ENCODE measurements at regions of chr9 and their contacts with region 1.

Region 1: GRCh38 chr9:18255158-18255629 is 218.8 kb upstream of the ADAMTSL1 start:
- DNase-seq: peak; percentile 73
- H3K4me3 ChIP-seq: no peak overlapping the region
- H3K27ac ChIP-seq: no peak overlapping the region
- H3K27me3 ChIP-seq: no peaks in the 10 kb centered on the region
- CTCF ChIP-seq: peak; percentile 91

Region 2: GRCh38 chr9:17942230-17942897 is 312.8 kb before region 1 on chr9:
- CTCF ChIA-PET with region 1: no interaction called
- POLR2A ChIA-PET with region 1: no interaction called
- DNase-seq: no peak
- H3K4me3 ChIP-seq: no peak overlapping the region
- H3K27ac ChIP-seq: no peak overlapping the region
- H3K27me3 ChIP-seq: no peaks in the 10 kb centered on the region
- CTCF ChIP-seq: no peak

Region 3: DNA sequence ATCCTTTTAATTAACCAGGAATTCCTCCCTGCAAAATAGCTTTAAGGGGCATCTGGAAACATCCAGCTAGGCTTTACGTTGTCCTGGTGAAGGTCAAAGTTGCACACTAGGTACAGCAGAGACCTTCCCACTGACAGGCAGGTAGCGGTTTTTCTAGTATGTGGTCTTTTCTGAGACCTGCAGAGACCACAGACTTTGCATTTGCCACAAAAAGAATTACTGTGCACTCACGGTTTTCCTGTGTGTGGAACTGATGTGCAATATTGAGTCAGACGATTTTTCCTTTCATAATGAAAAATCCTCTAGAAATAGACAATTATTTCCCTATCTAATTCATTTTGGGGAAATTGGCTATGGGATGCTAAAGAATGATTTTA is 198.2 kb before region 1 on chr9:
- CTCF ChIA-PET with region 1: no interaction called
- POLR2A ChIA-PET with region 1: no interaction called
- DNase-seq: no peak
- H3K4me3 ChIP-seq: no peak overlapping the region
- H3K27ac ChIP-seq: no peak overlapping the region
- H3K27me3 ChIP-seq: no peaks in the 10 kb centered on the region
- CTCF ChIP-seq: no peak

Region 4: GRCh38 chr9:18238254-18238653 is 16.9 kb before region 1 on chr9:
- CTCF ChIA-PET with region 1: interaction called, 12 read pairs
- POLR2A ChIA-PET with region 1: no interaction called
- DNase-seq: peak; percentile 8
- H3K4me3 ChIP-seq: peak overlapping the region; percentile 8; the same call in 1 of the 2 replicates
- H3K27ac ChIP-seq: peak overlapping the region; percentile 32
- H3K27me3 ChIP-seq: no peaks in the 10 kb centered on the region
- CTCF ChIP-seq: no peak

Region 5: DNA sequence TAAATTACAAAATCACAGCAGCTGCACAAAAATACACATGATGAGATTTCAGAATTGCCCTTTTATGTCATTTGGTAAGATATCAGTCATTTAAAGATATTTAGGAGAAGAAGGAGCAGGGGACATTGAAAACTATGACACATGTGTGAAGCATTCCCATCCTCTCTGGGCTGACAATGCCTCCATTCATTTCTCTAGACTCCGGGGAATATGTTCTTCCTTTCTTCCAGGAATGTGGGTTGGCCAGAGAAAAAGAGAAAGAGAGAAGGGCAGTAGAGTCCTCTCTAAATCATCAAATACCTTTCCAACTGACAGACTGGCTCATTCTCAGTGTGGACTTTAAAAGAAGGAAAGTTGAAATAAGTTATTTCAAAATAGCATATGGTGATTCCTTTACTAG is 13.2 kb after region 1 on chr9:
- CTCF ChIA-PET with region 1: interaction called, 18 read pairs
- POLR2A ChIA-PET with region 1: no interaction called
- DNase-seq: no peak
- H3K4me3 ChIP-seq: no peak overlapping the region
- H3K27ac ChIP-seq: no peak overlapping the region
- H3K27me3 ChIP-seq: no peaks in the 10 kb centered on the region
- CTCF ChIP-seq: no peak

Region 6: GRCh38 chr9:18396102-18396728 is 141.0 kb after region 1 on chr9:
- CTCF ChIA-PET with region 1: interaction called, 11 read pairs
- POLR2A ChIA-PET with region 1: no interaction called
- DNase-seq: no peak
- H3K4me3 ChIP-seq: no peak overlapping the region
- H3K27ac ChIP-seq: no peak overlapping the region
- H3K27me3 ChIP-seq: no peaks in the 10 kb centered on the region
- CTCF ChIP-seq: peak; percentile 22; the same call in 1 of the 2 replicates

Region 7: DNA sequence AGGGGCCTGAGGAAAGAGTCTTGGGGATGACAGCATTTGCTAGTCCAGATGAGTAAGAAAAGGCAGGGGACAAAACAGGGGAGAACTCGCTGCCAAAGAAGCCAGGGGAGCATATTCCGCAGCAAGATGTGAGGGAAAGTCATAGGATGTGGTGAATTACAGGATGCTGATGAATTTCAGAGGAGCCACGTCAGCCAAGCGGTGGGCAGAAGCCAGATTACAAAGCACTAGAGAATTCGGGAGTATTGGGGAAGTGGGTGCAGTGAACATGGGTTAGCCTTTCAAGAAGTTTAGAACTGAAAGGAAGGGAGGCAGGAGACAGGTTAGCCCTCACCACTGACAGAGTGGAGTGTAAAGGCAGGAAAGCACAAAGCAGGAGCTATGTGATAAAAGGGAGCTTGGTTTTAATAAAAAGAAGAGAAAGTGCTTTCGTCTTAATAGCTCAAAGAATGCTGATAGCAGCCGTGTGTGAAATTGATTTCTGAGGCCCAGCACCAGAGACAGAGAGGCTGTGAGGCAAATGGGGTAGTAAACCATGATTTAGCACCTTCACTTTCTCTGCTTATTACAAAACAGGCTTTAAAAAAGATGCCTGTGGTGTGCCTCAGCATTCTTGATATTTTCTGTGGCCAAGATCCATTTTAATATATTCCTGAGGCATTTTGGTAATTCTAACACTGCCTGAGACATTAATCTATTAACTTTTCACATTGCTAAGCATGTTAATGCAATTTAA is 235.6 kb after region 1 on chr9:
- CTCF ChIA-PET with region 1: interaction called, 15 read pairs
- POLR2A ChIA-PET with region 1: interaction called, 4 read pairs
- DNase-seq: peak; percentile 96
- H3K4me3 ChIP-seq: peak overlapping the region; percentile 47
- H3K27ac ChIP-seq: peak overlapping the region; percentile 98
- H3K27me3 ChIP-seq: no peaks in the 10 kb centered on the region
- CTCF ChIP-seq: no peak

Region 8: DNA sequence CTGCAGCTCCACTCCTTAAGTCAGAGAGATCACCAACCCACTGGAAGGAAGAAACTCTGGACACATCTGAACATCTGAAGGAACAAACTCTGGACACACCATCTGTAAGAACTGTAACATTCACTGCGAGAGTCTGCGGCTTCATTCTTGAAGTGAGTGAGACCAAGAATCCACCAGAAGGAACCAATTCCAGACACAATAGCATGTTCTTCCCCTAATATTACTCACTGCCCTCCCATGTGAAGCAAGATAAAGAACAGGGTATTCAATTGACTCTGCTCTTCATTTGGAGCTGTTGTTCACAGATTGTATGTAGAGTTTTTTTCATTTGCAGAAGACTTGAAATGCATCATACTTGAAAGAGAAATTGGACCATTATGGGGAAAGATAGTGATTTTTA is 767.0 kb after region 1 on chr9:
- CTCF ChIA-PET with region 1: interaction called, 108 read pairs
- POLR2A ChIA-PET with region 1: no interaction called
- DNase-seq: no peak
- H3K4me3 ChIP-seq: no peak overlapping the region
- H3K27ac ChIP-seq: no peak overlapping the region
- H3K27me3 ChIP-seq: peaks cover 3% of the 10 kb centered on the region
- CTCF ChIP-seq: no peak

Region 9: DNA sequence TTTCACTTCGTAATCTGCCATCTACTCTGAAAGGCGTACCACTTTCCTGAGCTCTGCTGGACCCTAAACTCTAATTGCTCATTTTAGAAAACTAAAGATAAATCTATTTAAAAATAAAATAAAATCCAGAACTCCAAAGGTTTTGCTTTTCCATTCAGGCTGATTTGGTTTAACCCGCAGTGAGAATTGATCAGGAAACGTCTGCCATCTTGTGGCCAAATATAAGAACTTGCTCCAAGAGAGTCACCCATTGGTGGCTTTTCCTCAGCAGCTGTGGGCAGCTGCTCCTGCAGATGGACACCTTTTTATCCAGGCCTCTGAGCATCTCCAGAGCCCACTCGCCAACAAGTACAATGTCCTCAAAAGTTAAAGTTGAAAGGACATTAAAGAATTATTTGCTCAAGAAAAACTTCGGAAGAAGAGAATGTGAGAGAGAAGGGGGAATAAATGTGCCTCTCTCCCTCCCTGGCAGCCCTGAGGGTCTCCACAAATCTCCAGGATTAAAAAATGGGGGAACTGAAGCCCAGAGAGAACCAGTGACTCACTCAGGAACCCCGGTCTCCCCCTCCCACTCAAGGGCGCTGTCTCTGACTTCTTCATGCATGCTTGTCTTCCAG is 773.7 kb after region 1 on chr9:
- CTCF ChIA-PET with region 1: interaction called, 108 read pairs
- POLR2A ChIA-PET with region 1: no interaction called
- DNase-seq: peak; percentile 52
- H3K4me3 ChIP-seq: no peak overlapping the region
- H3K27ac ChIP-seq: no peak overlapping the region
- H3K27me3 ChIP-seq: peaks cover 2% of the 10 kb centered on the region
- CTCF ChIP-seq: peak; percentile 74

Measured in AG04450 (cell line).